ENCODE measurements at regions of chr7 and their contacts with region 1.

Region 1: DNA sequence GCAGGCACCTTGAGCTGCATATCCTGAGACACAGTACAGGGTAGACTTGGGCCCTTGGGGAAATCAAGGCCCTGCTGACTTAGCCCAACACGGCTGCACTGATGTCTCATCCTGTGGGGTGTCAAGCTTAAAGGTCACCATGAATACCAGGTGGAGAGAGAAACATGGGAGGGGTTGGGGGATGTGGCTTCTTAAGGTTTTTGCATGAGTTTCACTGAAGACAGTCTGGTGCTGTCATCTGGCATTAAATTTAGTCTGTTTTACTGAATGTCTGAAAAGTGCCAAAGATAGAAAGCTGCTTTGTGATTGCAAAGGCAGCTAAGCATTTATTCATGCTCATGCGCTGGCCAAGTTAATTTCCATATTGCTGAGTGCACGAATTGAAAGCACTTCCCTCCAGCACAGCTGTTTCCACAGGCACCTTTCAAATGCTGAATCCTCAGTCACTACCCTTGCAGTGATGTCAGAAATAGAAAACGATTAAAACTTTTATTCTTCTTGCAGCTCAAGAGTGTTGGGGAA is 102.1 kb downstream of the OSBPL3 start:
- DNase-seq: no peak

Region 2: DNA sequence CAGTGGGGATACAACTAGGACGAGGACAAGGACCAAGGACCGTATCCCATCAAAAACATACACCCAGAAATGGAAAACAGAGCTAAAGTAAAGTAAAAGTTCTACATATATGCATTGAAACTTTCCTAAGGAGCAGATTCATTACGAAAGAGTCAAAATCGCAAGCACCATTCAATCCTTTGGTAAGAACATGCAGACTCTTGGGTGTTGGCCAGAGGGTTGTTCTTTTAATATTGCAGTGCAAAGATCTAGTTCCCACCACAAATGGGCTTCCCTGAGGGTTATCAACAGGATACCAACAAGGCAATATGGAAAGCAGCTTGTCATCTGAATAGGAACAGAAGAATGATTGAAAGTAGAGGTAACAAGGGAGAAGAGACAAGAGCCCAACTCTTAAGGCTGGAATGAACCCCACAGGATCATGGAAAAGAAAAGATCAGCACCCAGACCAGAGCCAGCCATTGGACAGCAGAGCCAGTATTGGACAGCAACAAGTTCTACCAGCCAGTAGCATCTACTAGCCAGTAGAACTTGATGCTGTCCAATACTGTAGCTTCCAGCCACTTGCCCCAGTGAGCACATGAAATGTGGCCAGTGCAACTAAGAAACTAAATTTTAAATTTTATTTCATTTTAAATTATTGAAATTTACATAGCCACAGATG is 36.1 kb after region 1 on chr7:
- intact Hi-C with region 1: loop called in 1 of 2 experiments (anchors 1 kb)
- DNase-seq: no peak

Region 3: GRCh38 chr7:24926623-24927524 is 49.0 kb after region 1 on chr7:
- intact Hi-C with region 1: no loop called
- DNase-seq: no peak

Measured in posterior vena cava (tissue), 2 donors.